ENCODE measurements at regions of chr4 and their contacts with region 1.

Region 1: DNA sequence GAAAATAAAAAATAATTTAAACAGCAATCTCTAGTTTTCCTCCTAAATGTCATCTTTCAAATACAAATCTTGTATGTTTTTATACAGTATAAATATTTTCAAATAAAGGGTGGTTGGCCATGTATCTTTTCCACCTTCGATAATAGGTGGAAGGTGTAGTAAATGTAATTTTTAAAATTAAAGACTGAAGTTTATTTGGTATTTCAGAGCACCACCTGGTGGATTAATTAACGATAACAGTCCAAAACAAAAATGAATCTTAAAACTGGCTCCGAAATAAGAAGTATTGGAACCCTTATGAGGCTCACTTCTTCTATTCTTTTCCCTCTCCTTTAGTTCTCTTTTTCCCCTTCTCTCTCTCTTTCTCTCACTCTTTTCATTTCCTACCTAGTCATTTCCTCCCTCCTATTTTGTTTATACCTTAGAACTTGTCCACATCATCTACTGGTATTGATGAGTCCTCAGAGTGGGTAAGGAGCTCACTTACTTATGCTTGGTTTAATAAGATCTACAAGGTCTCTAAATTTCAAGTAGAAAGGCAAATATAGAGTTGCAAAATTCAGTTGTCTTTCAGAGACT is 82.9 kb upstream of the EXOC1L start:
- DNase-seq: no peak
- H3K4me3 ChIP-seq: no peak overlapping the region
- H3K27ac ChIP-seq: no peak overlapping the region
- H3K4me1 ChIP-seq: peaks cover 19% of the 10 kb centered on the region
- H3K27me3 ChIP-seq: no peaks in the 10 kb centered on the region
- CTCF ChIP-seq: peak; percentile 70

Region 2: DNA sequence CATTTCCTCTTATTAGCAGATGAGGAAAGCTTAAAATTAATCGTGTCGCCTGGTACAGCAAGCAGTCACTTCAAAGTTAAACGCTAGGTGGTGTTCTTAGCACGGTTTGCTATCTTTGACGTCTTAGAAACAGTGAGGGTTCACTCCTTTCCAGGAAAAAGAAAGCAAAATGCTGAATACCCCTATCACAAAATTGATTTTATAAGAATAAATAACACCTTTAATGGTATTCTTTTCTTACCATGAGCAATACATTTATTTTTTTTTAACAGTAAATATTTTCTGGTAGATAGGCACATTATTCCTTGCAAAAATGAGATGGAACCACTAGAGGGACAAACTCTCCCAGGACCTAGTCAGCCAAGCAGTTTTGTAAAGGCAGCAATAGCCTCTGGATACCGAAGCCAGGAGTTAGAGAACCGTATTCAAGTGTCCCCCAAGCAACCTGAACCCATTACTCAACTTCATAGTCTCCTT is 765.2 kb before region 1 on chr4:
- CTCF ChIA-PET with region 1: no interaction called
- POLR2A ChIA-PET with region 1: no interaction called
- intact Hi-C with region 1: loop called (anchors 2 kb)
- DNase-seq: peak in 1 of 2 experiments; percentile 2
- H3K4me3 ChIP-seq: no peak overlapping the region
- H3K27ac ChIP-seq: no peak overlapping the region
- H3K4me1 ChIP-seq: no peaks in the 10 kb centered on the region
- H3K27me3 ChIP-seq: no peaks in the 10 kb centered on the region
- CTCF ChIP-seq: peak; percentile 88

Region 3: DNA sequence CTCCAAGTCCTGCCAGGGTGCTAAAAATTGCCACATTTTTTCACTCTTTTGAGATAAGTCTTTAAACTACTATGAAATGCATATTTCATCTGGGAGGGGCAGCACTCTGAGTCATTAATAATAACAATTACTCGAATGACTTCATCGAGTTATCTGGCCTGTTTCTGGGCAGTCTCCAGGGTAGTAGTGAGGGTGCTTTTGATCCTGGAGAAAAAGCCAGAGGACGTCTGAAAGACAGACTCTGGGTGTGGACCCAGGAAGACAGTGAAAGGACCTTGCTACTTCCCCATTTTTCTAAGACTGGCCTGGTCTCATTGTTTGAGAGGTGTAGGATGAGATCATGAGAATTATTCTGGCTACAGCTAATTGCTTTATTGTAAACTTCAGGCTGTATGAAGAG is 432.9 kb before region 1 on chr4:
- CTCF ChIA-PET with region 1: no interaction called
- POLR2A ChIA-PET with region 1: no interaction called
- intact Hi-C with region 1: loop called (anchors 5 kb)
- DNase-seq: peak; percentile 52 to 80
- H3K4me3 ChIP-seq: no peak overlapping the region
- H3K27ac ChIP-seq: peak overlapping the region; percentile 61
- H3K4me1 ChIP-seq: peaks cover 14% of the 10 kb centered on the region
- H3K27me3 ChIP-seq: no peaks in the 10 kb centered on the region
- CTCF ChIP-seq: no peak

Region 4: GRCh38 chr4:55444827-55445226 is 291.9 kb before region 1 on chr4:
- CTCF ChIA-PET with region 1: no interaction called
- POLR2A ChIA-PET with region 1: no interaction called
- intact Hi-C with region 1: loop called (anchors 10 kb)
- DNase-seq: no peak
- H3K4me3 ChIP-seq: no peak overlapping the region
- H3K27ac ChIP-seq: no peak overlapping the region
- H3K4me1 ChIP-seq: no peaks in the 10 kb centered on the region
- H3K27me3 ChIP-seq: no peaks in the 10 kb centered on the region
- CTCF ChIP-seq: no peak; the same call in 1 of the 2 replicates

Region 5: DNA sequence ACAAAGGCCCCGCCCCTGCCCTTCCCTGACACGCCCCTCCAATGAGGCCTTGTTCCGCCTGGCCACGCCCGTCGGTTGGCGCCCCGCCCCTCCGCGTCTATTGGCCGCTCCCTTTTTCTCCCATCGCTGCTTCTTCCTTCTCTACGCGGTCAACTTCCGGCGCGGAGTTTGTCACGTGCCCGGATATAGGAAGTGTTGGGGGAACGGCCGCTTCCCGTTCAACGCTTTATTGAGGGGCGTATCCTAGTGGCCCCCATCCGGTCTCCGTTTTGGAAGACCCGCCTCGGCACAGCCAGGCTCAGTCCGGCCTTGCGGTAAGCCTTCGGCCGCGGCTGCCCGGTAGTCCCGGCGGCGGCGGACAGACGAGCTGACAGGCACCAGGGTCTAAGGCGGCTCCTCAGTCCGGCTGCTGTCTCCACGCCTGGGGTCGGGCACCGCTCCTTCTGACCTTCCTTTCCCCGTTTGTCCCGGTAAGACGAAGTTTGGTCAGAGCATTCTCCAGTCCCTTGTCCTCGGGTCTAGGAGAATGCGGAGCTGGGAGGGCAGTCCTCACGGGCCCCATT is 116.9 kb after region 1 on chr4 and contains the start of gene EXOC1:
- CTCF ChIA-PET with region 1: no interaction called
- POLR2A ChIA-PET with region 1: no interaction called
- intact Hi-C with region 1: loop called (anchors 5 kb)
- DNase-seq: peak; percentile 86 to 93
- H3K4me3 ChIP-seq: peak within 1 kb of the TSS; percentile 91
- H3K27ac ChIP-seq: peak within 1 kb of the TSS; percentile 45
- H3K4me1 ChIP-seq: peaks cover 34% of the 10 kb centered on the region
- H3K27me3 ChIP-seq: no peaks in the 10 kb centered on the region
- CTCF ChIP-seq: no peak
- total RNA-seq, gene EXOC1: 23.1 and 27.1 TPM in 2 replicates

Region 6: DNA sequence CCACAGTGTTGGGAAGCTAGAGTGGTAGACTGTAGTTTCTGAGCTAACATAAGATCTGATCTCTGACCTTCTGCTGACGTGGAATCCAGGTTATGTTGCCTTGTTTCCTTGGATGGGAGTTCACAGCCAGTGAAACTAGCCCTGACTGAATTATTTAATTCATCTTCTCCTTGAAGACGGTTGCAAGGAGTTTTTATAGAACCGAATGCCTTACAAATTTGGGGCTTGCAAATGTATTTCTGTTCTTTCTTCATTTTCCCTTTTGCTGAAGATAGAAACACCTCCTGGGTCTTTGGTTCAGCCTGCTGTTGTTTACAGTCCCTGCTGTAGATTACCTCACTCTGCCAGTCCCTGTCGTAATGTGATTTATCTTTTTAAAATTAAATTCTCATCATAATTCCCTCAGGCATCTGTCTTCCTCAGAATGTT is 325.9 kb after region 1 on chr4:
- CTCF ChIA-PET with region 1: no interaction called
- POLR2A ChIA-PET with region 1: no interaction called
- intact Hi-C with region 1: no loop called
- DNase-seq: no peak
- H3K4me3 ChIP-seq: no peak overlapping the region
- H3K27ac ChIP-seq: no peak overlapping the region
- H3K4me1 ChIP-seq: no peaks in the 10 kb centered on the region
- H3K27me3 ChIP-seq: no peaks in the 10 kb centered on the region
- CTCF ChIP-seq: no peak